Activated CD4-positive, alpha-beta T cell treated with anti-CD3 and anti-CD28 coated beads for 36 hours (primary cell): ENCODE measurements at regions of chr21 and their contacts with region 1.

Region 1: GRCh38 chr21:43909741-43910486 is 44.9 kb downstream of the AGPAT3 start:
- DNase-seq: no peak
- ATAC-seq: no peak
- H3K4me3 Mint-ChIP-seq: no peak overlapping the region
- H3K27ac Mint-ChIP-seq: peak overlapping the region; percentile 48
- H3K4me1 Mint-ChIP-seq: peaks cover 18% of the 10 kb centered on the region
- H3K27me3 Mint-ChIP-seq: no peaks in the 10 kb centered on the region

Region 2: GRCh38 chr21:43925096-43925481 is 15.2 kb after region 1 on chr21:
- CTCF ChIA-PET with region 1: no interaction called
- POLR2A ChIA-PET with region 1: no interaction called
- intact Hi-C with region 1: no loop called
- DNase-seq: no peak
- ATAC-seq: no peak
- H3K4me3 Mint-ChIP-seq: no peak overlapping the region
- H3K27ac Mint-ChIP-seq: no peak overlapping the region
- H3K4me1 Mint-ChIP-seq: peaks cover 39% of the 10 kb centered on the region
- H3K27me3 Mint-ChIP-seq: no peaks in the 10 kb centered on the region

Region 3: GRCh38 chr21:43956670-43957035 is 46.7 kb after region 1 on chr21:
- CTCF ChIA-PET with region 1: no interaction called
- POLR2A ChIA-PET with region 1: no interaction called
- intact Hi-C with region 1: loop called (anchors 5 kb)
- DNase-seq: no peak
- ATAC-seq: no peak
- H3K4me3 Mint-ChIP-seq: no peak overlapping the region
- H3K27ac Mint-ChIP-seq: peak overlapping the region; percentile 53
- H3K4me1 Mint-ChIP-seq: peaks cover 23% of the 10 kb centered on the region
- H3K27me3 Mint-ChIP-seq: no peaks in the 10 kb centered on the region